WTC11 (cell line): ENCODE measurements at regions of chr11 and their contacts with region 1.

Region 1: DNA sequence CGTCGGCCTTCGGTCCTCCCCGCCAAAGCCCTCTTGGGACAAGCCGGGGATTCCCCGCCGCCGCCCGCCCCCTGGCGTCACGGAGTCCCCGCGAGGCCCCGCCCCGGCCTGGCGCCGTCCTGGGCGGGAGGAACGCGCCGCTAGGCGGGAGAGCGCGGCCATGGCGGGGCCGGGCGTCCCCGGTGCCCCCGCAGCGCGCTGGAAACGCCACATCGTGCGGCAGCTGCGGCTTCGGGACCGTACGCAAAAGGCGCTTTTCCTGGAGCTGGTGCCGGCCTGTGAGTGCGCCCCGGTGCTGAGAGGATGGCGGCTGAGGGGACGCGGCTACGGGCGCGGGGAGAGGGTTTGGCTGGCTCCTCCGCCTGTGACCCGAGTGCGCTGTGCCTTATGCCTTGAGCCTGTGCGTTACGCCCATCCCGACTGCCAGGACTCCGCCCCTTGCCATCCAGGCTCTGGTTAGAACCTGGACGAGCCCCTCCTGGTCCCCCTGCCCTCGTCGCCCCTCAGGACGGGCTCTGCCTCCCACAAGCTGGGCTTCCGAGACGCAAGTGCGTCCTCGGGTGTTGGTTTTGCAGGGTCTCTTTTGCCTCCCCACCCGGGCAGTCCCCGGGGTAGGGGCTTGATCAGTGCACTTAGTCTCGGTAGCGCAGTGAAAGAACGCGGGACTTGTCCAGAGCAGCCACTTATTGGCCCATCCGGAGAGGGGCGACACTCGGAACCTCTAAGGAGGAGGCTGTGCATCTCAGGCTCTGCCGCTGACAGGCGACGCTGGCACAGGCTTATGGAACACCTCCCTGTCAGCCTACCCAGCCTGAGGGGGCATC is at the start of gene ATG16L2:
- DNase-seq: peak; percentile 84
- ATAC-seq: peak; percentile 80
- H3K4me3 Mint-ChIP-seq: peak within 1 kb of the TSS; percentile 95
- H3K27ac Mint-ChIP-seq: peak within 1 kb of the TSS; percentile 97
- H3K4me1 Mint-ChIP-seq: peaks cover 32% of the 10 kb centered on the region
- H3K27me3 Mint-ChIP-seq: peaks cover 22% of the 10 kb centered on the region
- CTCF ChIP-seq: no peak
- total RNA-seq, gene ATG16L2: 22.2 to 29.0 TPM (median 28.6 TPM) in 3 replicates

Region 2: DNA sequence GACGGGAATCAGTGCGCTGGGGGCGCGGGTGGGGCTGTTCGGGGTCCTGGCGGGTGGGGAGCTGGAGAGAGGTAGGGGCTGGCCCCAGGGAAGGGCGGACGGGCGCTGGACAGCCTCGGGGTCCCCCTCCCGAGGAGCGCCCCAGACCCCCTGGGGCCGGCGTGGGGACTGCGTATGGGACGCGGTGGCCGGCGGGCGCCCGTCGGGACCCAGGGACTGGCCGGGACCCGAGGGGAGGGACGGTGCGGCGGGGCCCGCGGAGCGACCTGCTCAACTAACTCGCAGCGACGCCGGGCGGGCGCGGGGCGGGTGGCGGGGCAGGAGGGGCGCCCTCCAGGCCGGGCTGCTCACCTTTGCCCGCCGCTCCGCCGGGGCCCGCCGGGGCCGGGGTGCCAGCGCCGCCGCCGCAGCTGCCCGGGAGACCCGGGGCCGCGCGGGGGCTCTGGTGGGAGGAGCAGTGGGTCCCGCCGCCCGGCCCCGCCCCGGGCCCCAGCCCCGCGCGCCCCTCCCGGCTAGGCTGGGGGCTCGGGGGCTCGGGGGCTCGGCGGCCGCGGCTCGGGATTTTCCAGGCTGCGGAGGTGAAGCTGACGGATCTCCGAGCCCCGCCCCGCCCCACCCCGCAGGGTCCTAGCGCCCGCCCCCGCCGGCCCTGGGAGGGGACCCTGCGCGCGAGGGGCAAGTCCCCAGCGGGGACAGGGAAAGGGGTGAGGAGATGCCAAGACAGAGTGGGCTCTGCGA is 33.0 kb before region 1 on chr11:
- CTCF ChIA-PET with region 1: interaction called, 12 read pairs
- POLR2A ChIA-PET with region 1: no interaction called
- DNase-seq: peak; percentile 49
- ATAC-seq: peak; percentile 35
- H3K4me3 Mint-ChIP-seq: peak overlapping the region; percentile 87
- H3K27ac Mint-ChIP-seq: no peak overlapping the region
- H3K4me1 Mint-ChIP-seq: peaks cover 25% of the 10 kb centered on the region
- H3K27me3 Mint-ChIP-seq: peaks cover 7% of the 10 kb centered on the region
- CTCF ChIP-seq: no peak

Region 3: DNA sequence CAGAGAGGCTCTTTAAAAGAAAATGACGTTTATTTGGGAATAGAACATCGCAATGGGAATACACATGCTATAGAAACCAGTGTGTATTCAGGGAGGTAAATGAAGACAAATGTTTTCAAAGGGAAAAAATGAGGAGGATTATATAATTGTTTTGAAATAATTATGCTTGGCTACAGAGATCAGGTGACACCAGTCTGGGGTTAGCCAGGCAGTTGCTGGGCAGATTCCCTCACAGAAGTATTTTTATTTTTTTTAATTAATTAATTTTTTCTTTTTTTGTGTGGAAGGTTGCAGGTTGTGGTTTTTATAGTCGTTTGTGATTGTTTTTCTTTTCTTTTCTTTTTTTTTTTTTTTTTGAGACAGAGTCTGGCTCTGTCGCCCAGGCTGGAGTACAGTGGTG is 15.1 kb before region 1 on chr11:
- CTCF ChIA-PET with region 1: interaction called, 54 read pairs
- POLR2A ChIA-PET with region 1: interaction called, 5 read pairs
- DNase-seq: no peak
- ATAC-seq: no peak
- H3K4me3 Mint-ChIP-seq: no peak overlapping the region
- H3K27ac Mint-ChIP-seq: no peak overlapping the region
- H3K4me1 Mint-ChIP-seq: peaks cover 18% of the 10 kb centered on the region
- H3K27me3 Mint-ChIP-seq: no peaks in the 10 kb centered on the region
- CTCF ChIP-seq: no peak

Region 4: GRCh38 chr11:72831513-72832300 is 17.2 kb after region 1 on chr11:
- CTCF ChIA-PET with region 1: interaction called, 10 read pairs
- POLR2A ChIA-PET with region 1: no interaction called
- DNase-seq: peak; percentile 90
- ATAC-seq: peak; percentile 97
- H3K4me3 Mint-ChIP-seq: no peak overlapping the region
- H3K27ac Mint-ChIP-seq: no peak overlapping the region
- H3K4me1 Mint-ChIP-seq: peaks cover 9% of the 10 kb centered on the region
- H3K27me3 Mint-ChIP-seq: peaks cover 6% of the 10 kb centered on the region
- CTCF ChIP-seq: peak; percentile 59